HAP-1 (cell line): ENCODE measurements at regions of chr7 and their contacts with region 1.

Region 1: DNA sequence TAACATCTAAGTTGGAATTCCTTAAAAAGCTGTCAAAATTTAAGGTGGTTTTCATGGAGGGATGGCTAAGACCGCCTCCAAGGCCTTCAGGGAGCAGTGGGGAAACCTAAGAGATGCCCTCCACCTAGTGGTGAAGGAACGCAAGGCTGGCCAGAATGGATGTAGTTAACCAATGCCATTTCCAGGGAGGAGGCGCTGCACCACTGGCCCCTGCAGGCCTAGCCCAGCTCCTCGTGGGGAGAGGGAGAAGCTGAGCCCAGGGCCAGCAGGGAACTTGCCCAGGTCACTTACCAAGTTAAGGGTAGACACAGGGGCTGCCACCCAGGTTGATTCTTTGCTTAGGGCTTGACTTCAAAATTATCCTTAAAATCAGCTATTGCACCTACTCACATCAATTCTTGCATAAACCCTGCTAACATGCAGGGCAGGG is 32.0 kb downstream of the FIGNL1 start:
- DNase-seq: peak; percentile 70 to 85
- H3K4me3 ChIP-seq: no peak overlapping the region
- H3K4me1 ChIP-seq: no peaks in the 10 kb centered on the region
- H3K27me3 ChIP-seq: no peaks in the 10 kb centered on the region

Region 2: DNA sequence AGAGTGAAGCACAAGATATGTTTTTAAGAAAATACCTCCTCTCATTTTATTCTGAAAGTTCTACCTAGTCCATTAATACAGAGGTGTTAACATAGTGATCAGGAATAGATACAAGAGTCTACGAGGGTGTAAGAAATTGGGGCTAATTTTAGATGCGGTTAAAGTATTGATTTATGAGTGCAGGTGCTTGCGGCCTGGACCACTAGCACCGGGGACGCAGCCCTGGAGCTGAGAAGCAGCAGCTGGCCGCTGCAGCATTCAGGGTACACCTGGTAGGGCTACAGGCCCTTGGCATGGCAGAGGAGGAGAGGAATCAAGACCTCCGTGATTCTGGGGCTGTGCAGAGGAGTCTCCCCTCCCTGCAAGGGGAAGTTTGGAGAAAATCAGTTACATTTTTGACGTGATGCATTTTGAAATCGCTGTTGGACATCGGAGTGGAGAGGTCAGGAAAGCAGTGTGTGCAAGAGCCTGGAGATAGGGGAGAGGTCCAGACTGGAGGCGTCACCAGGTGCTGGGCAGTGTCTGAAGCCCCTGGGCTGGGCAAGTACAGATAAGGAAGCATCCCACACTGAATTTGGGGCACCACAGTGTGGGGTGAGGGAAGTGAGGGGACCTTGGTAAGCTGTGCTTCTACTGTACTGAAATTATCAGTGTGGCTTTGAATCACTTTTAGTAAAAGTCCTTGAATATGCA is 532.4 kb before region 1 on chr7:
- in situ Hi-C with region 1: no loop called
- DNase-seq: no peak
- H3K4me3 ChIP-seq: no peak overlapping the region
- H3K4me1 ChIP-seq: no peaks in the 10 kb centered on the region
- H3K27me3 ChIP-seq: no peaks in the 10 kb centered on the region

Region 3: GRCh38 chr7:50092579-50093491 is 325.3 kb before region 1 on chr7 and contains the start of gene ZPBP:
- in situ Hi-C with region 1: loop called (anchors 25 kb)
- DNase-seq: peak; percentile 35 to 48
- H3K4me3 ChIP-seq: no peak within 1 kb of the TSS
- H3K4me1 ChIP-seq: no peaks in the 10 kb centered on the region
- H3K27me3 ChIP-seq: no peaks in the 10 kb centered on the region; the same call in 1 of the 2 replicates